Endothelial cell of umbilical vein (primary cell): ENCODE measurements at regions of chr11 and their contacts with region 1.

Region 1: GRCh38 chr11:59560702-59561469 is 49.5 kb downstream of the OR4D9 start:
- DNase-seq: peak; percentile 88
- H3K4me3 ChIP-seq: peak overlapping the region; percentile 50 to 93 (median 70)
- H3K27ac ChIP-seq: peak overlapping the region; percentile 60
- H3K4me1 ChIP-seq: peaks cover 9% of the 10 kb centered on the region
- H3K27me3 ChIP-seq: no peaks in the 10 kb centered on the region
- CTCF ChIP-seq: no peak
- POLR2A ChIP-seq: no peak

Region 2: DNA sequence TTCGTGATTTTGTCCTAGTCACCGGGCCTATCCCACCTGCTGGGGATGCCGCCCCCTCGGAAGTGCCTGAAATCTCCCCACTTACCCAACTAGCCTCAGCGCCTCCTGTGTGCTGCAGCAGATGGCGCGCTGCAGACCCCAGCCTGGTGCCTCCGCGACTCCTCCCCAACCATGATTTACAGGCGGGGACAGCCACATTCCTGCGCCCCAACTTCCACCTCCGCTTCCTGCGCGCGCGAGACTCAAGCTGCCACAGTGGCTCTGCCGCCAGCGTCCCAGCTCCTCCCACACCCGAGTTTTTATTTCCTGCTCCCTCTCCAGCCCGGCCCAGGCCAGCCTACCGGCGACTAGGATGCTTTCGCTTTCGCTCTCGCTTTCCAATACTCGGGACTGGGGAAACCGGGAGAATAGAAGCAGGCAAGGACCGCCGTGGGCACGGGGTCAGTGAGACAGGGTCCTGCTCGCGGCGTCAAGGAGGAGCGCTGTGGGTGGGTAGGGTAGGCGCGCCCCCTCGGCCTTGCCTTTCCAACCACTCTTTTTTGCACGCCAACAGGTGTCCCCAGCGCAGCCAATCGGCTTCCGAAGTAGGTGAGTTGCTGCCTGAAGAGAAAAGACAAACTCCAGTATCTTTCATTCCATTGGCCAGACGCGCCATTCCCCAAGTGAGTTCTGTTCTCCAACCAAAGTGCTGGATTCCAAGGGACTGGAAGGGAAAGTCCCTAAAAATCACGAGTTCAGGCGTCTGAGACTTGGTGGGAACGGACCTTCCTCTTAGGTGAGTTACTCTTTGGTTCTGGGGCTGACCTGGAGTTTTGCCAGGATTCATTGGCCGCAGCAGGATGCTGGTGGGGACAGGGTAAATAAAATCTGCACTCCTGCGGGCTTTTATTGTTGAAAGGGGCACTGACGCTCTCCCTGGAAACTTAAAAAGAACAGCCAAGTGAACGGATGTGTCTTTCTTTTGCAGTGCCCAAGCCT is 418.1 kb before region 1 on chr11 and contains the start of gene FAM111A:
- CTCF ChIA-PET with region 1: no interaction called
- POLR2A ChIA-PET with region 1: no interaction called
- dilution Hi-C with region 1: no loop called
- intact Hi-C with region 1: loop called (anchors 5 kb)
- DNase-seq: peak; percentile 91
- H3K4me3 ChIP-seq: peak within 1 kb of the TSS; percentile 69 to 90 (median 74)
- H3K27ac ChIP-seq: peak within 1 kb of the TSS; percentile 74
- H3K4me1 ChIP-seq: peaks cover 32% of the 10 kb centered on the region
- H3K27me3 ChIP-seq: no peaks in the 10 kb centered on the region
- CTCF ChIP-seq: peak; percentile 17 to 47
- POLR2A ChIP-seq: peak; percentile 66
- total RNA-seq, gene FAM111A: 53.0 and 57.4 TPM in 2 replicates

Region 3: DNA sequence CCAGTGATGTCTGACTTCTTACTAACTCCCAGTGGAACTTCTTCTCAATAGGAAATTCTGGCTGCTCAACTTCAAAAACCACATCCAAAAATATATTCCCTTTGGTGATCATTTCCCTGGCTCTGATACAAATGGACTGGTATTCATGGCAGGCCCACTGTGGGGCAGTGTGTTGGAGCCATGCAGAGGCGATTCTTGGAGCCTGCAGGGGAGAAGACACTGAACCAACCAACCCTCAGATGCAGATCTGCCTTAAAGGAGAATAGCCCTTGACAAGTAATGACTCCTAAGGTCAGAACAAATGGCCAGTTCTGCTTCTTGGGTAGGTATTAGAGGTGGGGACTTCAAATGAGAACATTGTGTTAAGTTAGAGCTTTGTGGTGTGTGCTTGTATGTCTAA is 37.3 kb before region 1 on chr11:
- CTCF ChIA-PET with region 1: no interaction called
- POLR2A ChIA-PET with region 1: no interaction called
- dilution Hi-C with region 1: no loop called
- intact Hi-C with region 1: no loop called
- DNase-seq: no peak
- H3K4me3 ChIP-seq: no peak overlapping the region
- H3K27ac ChIP-seq: no peak overlapping the region
- H3K4me1 ChIP-seq: no peaks in the 10 kb centered on the region
- H3K27me3 ChIP-seq: peaks cover 10% of the 10 kb centered on the region in 2 experiments
- CTCF ChIP-seq: peak in 1 of 2 donors; percentile 8
- POLR2A ChIP-seq: no peak

Region 4: DNA sequence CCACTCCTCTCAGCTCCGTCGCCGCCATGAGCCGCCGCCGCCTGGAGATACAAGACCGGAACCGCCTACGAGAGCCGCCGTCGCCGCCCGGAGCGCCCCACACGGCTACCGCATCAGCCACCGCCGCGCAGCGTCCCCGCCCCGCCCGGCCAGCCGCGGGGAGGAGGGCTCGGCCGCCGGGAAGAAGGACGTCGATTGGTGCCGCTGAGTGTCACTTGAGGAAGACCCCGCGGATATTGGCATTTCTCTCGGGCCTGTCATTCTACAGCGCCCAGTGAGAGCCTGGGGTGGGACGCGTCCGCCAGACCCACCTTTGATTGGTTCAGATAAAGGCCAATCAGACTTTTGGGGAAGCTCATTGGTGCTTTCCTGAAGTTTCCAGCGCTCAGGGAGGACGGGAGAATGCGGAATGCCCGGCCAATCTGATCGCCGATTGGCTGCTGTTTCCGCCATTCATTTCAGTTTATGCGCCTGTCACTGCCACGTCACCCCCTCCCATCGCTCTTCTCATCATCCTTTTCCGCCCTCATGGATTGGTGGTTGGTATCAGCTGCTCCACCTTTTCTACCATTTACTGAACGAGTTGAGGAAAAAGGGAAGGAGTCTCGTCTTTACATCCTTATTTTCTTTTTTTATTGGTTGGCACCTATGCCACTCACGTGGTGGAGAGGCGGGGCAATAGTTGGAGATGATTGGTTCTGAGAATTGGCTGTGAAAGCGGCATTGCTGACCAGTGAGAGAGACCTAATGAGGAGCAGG is 54.9 kb after region 1 on chr11 and contains the start of gene OSBP:
- CTCF ChIA-PET with region 1: interaction called, 4 read pairs
- POLR2A ChIA-PET with region 1: interaction called, 4 read pairs
- dilution Hi-C with region 1: no loop called
- intact Hi-C with region 1: loop called (anchors 1 kb)
- DNase-seq: peak; percentile 100
- H3K4me3 ChIP-seq: peak within 1 kb of the TSS; percentile 74 to 90 (median 81)
- H3K27ac ChIP-seq: peak within 1 kb of the TSS; percentile 62
- H3K4me1 ChIP-seq: peaks cover 17% of the 10 kb centered on the region
- H3K27me3 ChIP-seq: no peaks in the 10 kb centered on the region
- CTCF ChIP-seq: no peak
- POLR2A ChIP-seq: peak; percentile 84
- total RNA-seq, gene OSBP: 37.5 and 37.9 TPM in 2 replicates